ENCODE measurements at regions of chr3 and their contacts with region 1.

Region 1: GRCh38 chr3:97793420-97794019 is 28.3 kb upstream of the CRYBG3 start:
- DNase-seq: peak; percentile 70
- H3K4me3 Mint-ChIP-seq: no peak overlapping the region
- H3K27ac Mint-ChIP-seq: no peak overlapping the region
- H3K4me1 Mint-ChIP-seq: no peaks in the 10 kb centered on the region
- H3K27me3 Mint-ChIP-seq: no peaks in the 10 kb centered on the region
- CTCF ChIP-seq: peak; percentile 65

Region 2: GRCh38 chr3:97940034-97940433 is 146.5 kb after region 1 on chr3:
- CTCF ChIA-PET with region 1: interaction called, 12 read pairs
- POLR2A ChIA-PET with region 1: no interaction called
- intact Hi-C with region 1: loop called (anchors 1 kb)
- DNase-seq: peak; percentile 23
- H3K4me3 Mint-ChIP-seq: no peak overlapping the region
- H3K27ac Mint-ChIP-seq: no peak overlapping the region
- H3K4me1 Mint-ChIP-seq: no peaks in the 10 kb centered on the region
- H3K27me3 Mint-ChIP-seq: no peaks in the 10 kb centered on the region
- CTCF ChIP-seq: no peak

Region 3: DNA sequence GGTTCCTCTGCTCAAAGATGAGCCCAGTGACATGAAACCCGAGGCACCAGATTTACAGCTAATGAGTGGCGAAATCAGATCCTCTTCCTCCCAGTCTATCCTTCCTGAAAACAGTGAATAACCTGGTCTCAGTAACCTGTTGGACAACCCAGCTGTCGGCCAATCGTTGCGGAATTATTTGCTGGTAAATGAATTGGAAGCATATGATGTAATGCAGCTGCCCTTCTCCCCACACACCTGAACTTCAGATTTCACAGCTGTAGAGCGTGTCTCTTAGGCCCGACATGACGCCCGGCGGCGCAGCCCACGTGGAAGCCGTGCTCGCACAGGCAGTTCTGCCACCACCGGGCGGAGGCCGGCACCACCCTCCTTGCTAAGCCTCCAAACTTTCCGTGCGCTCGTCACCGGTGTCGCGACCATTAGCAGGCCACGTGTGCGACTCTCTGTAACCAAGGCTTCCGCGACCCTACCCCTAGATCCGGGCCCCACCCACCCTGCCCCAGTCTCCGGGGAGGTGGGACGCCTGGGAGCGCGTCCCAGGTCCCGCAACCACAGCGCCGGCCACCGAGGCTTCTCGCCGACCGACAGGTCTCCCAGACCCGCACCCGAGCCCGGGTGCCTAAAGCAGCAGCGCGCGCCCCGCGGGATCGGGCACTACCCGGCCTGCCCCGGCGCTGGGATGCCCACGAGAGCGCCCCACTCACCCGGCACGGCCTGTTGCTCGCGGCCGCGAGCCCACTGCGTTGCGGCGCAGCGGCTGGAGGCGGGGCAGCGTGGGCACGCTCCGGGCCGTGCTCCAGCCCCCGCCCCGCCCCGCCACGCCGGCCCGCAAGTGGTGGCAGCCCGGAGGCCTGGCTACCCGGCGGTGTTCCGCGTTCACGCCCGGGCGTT is 178.4 kb after region 1 on chr3 and contains the start of gene RIOX2:
- CTCF ChIA-PET with region 1: interaction called, 10 read pairs
- POLR2A ChIA-PET with region 1: no interaction called
- intact Hi-C with region 1: no loop called
- DNase-seq: peak; percentile 69
- H3K4me3 Mint-ChIP-seq: peak within 1 kb of the TSS; percentile 77
- H3K27ac Mint-ChIP-seq: peak within 1 kb of the TSS; percentile 25
- H3K4me1 Mint-ChIP-seq: peaks cover 25% of the 10 kb centered on the region
- H3K27me3 Mint-ChIP-seq: no peaks in the 10 kb centered on the region
- CTCF ChIP-seq: no peak
- total RNA-seq, gene RIOX2: 51.8 and 73.9 TPM in 2 replicates

Region 4: DNA sequence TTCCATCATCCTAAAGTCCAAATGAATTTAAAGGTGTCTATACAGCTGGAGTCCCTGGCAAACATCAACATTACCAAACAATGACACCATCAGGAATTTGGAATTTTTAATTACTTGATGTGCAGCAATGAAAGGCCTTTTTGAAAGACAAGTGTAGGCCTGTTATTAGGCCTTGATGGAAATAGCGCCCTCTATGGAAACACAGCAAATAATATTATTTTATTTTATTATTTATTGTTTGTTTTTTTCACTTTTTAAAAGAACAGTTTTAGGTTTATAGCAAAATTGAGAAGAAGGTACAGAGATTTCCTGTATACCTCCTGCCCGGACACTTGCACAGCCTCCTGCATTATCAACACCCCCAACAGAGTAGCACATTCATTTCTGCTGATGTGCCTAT is 275.3 kb after region 1 on chr3:
- CTCF ChIA-PET with region 1: no interaction called
- POLR2A ChIA-PET with region 1: no interaction called
- intact Hi-C with region 1: no loop called
- DNase-seq: no peak
- H3K4me3 Mint-ChIP-seq: no peak overlapping the region
- H3K27ac Mint-ChIP-seq: no peak overlapping the region
- H3K4me1 Mint-ChIP-seq: no peaks in the 10 kb centered on the region
- H3K27me3 Mint-ChIP-seq: peaks cover 87% of the 10 kb centered on the region
- CTCF ChIP-seq: no peak

Region 5: DNA sequence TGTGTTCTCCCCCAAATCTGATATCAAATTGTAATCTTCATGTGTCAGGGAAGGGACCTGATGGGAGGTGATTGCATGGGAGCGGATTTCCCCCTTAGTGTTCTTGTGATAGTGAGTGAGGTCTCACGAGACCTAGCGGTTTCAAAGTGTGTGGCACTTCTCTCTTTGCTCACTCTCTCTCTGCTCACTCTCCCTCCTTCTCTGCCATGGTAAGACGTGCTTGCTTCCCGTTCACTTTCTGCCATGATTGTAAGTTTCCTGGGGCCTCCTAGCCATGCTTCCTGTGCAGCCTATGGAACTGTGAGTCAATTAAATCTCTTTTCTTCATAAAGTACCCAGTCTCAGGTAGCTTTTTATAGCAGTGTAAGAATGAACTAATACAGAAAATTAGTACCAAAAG is 439.9 kb after region 1 on chr3:
- CTCF ChIA-PET with region 1: no interaction called
- POLR2A ChIA-PET with region 1: no interaction called
- intact Hi-C with region 1: no loop called
- DNase-seq: no peak
- H3K4me3 Mint-ChIP-seq: no peak overlapping the region
- H3K27ac Mint-ChIP-seq: no peak overlapping the region
- H3K4me1 Mint-ChIP-seq: no peaks in the 10 kb centered on the region
- H3K27me3 Mint-ChIP-seq: peaks cover 73% of the 10 kb centered on the region
- CTCF ChIP-seq: no peak

Measured in MCF 10A (cell line).